Posterior vena cava (tissue), 2 donors: ENCODE measurements at regions of chr1 and their contacts with region 1.

Region 1: DNA sequence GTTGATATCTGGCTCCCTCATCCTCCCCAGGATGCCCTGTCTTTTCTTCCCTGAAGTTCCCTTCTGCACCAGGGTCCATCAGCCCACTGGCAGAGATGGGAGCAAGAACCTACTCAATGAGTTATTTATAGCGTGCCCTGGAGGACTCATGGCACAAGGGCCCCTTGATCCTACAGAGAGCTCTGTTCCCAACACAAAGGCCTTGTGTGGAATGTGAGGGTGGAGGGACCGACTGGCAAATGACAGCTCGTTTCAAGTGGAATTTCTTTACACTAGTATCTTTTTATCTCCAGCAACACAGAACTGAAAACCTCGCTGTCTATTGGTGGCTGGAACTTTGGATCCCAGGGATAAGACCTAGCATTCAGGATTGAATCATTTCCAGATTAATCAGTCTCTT is 22.4 kb downstream of the CHI3L2 start:
- DNase-seq: no peak

Region 2: DNA sequence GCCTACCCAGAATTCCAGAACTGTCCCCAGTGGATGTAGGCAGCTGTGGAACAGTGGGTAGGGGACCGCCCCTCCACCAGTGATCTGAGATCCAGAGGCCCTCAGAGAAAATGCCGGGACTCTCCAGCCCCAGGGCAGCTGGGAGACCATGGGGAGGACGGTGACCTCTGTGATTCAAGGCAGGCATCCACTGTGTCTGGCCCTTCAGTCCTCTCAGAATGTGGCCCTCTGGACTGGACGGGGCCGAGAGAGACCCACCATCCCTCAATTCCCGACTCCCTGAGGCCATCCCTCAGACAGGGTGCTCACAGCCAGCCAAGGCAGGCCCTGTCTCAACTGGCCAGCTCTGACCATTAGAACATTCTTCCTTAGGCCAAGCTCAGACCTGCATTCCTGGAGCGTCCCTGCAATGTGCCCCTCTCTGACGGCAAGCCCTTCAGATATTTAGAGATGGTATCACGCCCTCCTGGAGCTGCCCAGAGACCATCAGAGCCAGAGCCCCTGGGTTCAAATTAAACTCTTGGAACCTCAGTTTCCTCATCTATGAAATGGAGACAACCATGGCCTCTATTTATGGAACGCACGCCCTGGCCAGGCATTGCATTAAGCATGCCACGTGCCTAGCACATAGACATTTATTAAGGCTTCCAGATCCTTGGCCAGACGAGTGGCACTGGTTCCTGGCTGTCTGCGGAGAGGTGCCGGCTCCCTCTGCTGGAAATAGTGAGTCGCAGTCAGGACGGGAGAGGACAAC is 1476.6 kb before region 1 on chr1:
- intact Hi-C with region 1: no loop called
- DNase-seq: peak; percentile 92

Region 3: GRCh38 chr1:111412839-111413238 is 162.9 kb after region 1 on chr1:
- intact Hi-C with region 1: no loop called
- DNase-seq: no peak

Region 4: DNA sequence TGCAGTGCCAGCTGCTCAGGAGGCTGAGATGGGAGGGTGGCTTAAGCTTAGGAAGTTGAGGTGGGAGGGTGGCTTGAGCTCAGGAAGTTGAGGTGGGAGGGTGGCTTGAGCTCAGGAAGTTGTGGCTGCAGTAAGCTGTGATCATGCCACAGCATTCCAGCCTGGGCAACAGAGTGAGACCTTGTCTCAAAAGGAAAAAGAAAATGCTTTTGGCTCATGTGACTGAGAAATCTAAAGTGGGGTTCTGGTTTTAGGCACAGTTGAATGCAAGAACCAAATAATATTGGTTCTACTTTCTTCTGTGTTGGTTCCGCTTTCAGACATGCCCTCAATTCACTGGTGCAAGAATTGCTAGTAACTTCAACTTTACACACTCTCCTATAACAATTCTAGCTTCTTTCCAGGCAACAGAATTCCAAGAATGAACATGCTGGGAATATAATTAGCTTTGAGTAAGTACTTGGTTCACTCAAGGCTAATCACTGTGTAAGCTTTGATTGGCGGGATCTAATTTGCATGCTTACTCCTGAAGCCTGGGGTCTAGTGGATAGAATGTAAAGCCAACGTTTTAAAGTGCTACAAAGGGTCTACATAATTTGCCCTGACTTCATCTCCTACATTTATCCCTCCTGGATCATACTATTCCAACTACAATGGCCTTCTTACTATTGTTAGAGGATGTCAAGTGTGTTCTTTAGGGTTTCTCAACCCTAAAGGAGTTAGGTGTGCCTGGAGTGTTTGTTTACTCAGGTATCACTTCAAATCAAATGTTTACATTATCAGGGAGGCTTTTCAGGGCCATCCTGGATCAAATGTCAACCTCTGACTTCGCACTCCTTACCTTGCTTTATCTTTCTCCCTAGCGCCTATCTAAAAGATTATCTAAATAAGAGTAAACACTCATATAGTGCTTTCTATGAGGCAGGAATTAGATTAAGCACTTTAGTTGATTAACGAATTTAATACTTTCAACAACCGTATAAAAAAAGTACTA is 1591.0 kb after region 1 on chr1:
- intact Hi-C with region 1: loop called in 1 of 2 experiments (anchors 5 kb)
- DNase-seq: no peak